ENCODE measurements at regions of chr22 and their contacts with region 1.

Region 1: DNA sequence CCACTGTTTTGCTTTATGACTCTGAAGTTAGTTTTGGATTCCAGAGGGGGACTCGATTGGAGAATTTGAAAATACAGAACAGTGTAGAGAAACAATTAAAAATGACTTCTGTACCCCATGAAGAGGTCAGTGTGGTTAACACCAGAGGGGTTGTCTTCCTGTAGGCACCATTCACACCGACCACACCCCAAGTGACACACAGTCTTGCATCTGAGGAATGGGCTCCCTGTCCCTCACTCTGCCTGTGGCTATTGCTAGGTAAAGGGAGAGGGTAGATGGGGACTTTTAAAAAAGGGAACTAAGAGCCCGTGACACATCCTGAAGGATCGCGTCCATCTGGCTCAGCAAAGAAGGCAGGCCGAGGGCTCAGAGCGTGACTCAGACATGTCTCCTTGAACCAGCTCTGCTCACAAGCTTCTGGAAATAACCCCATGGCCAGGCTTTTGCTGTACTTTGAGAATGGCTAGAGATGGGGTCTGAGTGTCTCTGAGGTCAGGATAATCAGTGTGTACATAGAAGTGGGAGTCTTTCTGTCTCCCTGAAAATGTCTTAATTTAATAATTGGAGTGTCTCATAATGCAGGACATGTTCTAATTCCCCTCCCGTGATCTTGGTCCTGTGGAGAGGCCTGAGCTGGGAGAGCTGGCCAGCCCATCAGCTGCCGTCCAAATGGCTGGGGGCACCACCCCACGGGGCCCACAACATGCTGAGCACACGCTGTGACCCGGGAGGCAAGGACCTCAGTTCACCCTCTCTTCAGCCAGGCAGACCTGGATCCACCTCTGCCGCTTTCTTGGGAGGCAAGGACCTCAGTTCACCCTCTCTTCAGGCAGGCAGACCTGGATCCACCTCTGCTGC is 39.3 kb downstream of the SGSM1 start:
- DNase-seq: no peak
- ATAC-seq: peak; percentile 30
- H3K4me3 Mint-ChIP-seq: no peak overlapping the region
- H3K27ac Mint-ChIP-seq: no peak overlapping the region
- H3K4me1 Mint-ChIP-seq: peaks cover 17% of the 10 kb centered on the region
- H3K27me3 Mint-ChIP-seq: peaks cover 2% of the 10 kb centered on the region

Region 2: GRCh38 chr22:24758164-24758799 is 87.0 kb before region 1 on chr22:
- CTCF ChIA-PET with region 1: interaction called, 10 read pairs
- POLR2A ChIA-PET with region 1: interaction called, 3 read pairs
- DNase-seq: peak; percentile 74
- ATAC-seq: no peak
- H3K4me3 Mint-ChIP-seq: no peak overlapping the region
- H3K27ac Mint-ChIP-seq: no peak overlapping the region
- H3K4me1 Mint-ChIP-seq: no peaks in the 10 kb centered on the region
- H3K27me3 Mint-ChIP-seq: peaks cover 9% of the 10 kb centered on the region

Region 3: GRCh38 chr22:24768537-24769374 is 76.5 kb before region 1 on chr22:
- CTCF ChIA-PET with region 1: interaction called, 45 read pairs
- POLR2A ChIA-PET with region 1: no interaction called
- DNase-seq: peak; percentile 57
- ATAC-seq: peak; percentile 64
- H3K4me3 Mint-ChIP-seq: no peak overlapping the region
- H3K27ac Mint-ChIP-seq: no peak overlapping the region
- H3K4me1 Mint-ChIP-seq: peaks cover 6% of the 10 kb centered on the region
- H3K27me3 Mint-ChIP-seq: peaks cover 5% of the 10 kb centered on the region

Region 4: DNA sequence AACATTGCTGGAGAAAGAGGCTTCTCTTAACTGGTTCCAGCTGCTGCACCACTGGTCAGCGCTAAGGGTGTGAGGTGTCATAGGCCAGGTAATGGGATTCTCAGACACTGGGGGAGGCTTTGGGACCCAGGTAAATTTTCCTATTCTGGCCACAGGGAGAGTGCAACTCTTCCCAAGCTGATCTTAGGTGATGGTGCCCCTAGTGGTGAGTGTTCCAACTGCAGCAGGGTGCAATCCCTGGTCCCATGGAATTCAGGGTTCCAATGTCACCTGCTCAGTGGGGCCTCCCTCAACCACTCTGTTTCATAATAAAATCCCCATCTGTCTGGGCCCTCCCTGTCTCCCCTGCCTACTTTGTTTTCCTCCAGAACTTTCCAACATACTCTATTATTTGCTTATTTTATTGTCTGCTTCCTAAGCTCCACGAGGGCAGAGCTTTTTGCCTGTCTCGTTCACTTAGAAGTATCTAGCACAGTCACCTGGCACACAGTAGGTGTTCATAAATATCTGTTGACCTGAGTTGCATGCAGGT is 42.2 kb before region 1 on chr22:
- CTCF ChIA-PET with region 1: interaction called, 16 read pairs
- POLR2A ChIA-PET with region 1: no interaction called
- DNase-seq: peak; percentile 63
- ATAC-seq: no peak
- H3K4me3 Mint-ChIP-seq: no peak overlapping the region
- H3K27ac Mint-ChIP-seq: no peak overlapping the region
- H3K4me1 Mint-ChIP-seq: peaks cover 7% of the 10 kb centered on the region
- H3K27me3 Mint-ChIP-seq: peaks cover 6% of the 10 kb centered on the region